Gastrocnemius medialis (tissue), 4 donors: ENCODE measurements at regions of chr3 and their contacts with region 1.

Region 1: GRCh38 chr3:178385280-178385952 is 150.8 kb upstream of the KCNMB2 start:
- DNase-seq: no peak
- ATAC-seq: peak; percentile 47 to 80
- H3K4me3 ChIP-seq: no peak overlapping the region
- H3K27ac ChIP-seq: no peak overlapping the region
- H3K4me1 ChIP-seq: peaks cover 0 to 24% of the 10 kb centered on the region in 2 donors
- H3K27me3 ChIP-seq: no peaks in the 10 kb centered on the region
- CTCF ChIP-seq: peak; percentile 58 to 87 (median 80)
- POLR2A ChIP-seq: no peak

Region 2: DNA sequence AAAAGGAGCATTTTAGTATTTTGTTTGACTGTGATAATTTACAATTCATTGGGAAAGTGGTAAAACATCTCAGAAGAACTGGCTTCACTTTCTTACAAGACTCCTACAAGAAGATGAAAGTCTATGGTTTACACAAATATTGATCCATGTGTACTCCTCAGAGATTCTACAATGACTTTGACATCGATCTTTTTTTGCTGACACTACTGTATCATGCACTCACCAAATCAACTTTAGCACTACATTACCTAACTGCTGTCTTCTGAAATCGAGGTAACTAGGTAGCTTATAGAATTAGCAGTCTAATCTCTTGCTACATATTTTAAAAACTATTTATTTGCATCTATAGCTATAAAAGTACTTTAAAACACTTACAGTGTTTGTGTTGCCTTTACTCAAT is 1945.7 kb before region 1 on chr3:
- in situ Hi-C with region 1: no loop called
- intact Hi-C with region 1: loop called (anchors 5 kb)
- DNase-seq: no peak
- ATAC-seq: no peak
- H3K4me3 ChIP-seq: no peak overlapping the region
- H3K27ac ChIP-seq: no peak overlapping the region
- H3K4me1 ChIP-seq: no peaks in the 10 kb centered on the region
- H3K27me3 ChIP-seq: no peaks in the 10 kb centered on the region
- CTCF ChIP-seq: no peak
- POLR2A ChIP-seq: no peak

Region 3: GRCh38 chr3:177057768-177058167 is 1327.6 kb before region 1 on chr3:
- in situ Hi-C with region 1: no loop called
- intact Hi-C with region 1: loop called (anchors 5 kb)
- DNase-seq: no peak
- ATAC-seq: no peak
- H3K4me3 ChIP-seq: no peak overlapping the region
- H3K27ac ChIP-seq: no peak overlapping the region
- H3K4me1 ChIP-seq: peaks cover 45 to 65% of the 10 kb centered on the region in 2 donors
- H3K27me3 ChIP-seq: no peaks in the 10 kb centered on the region
- CTCF ChIP-seq: no peak
- POLR2A ChIP-seq: no peak